Gastrocnemius medialis (tissue), 4 donors: ENCODE measurements at regions of chr2 and their contacts with region 1.

Region 1: GRCh38 chr2:159615140-159615951 is 1.0 kb downstream of the BAZ2B start:
- DNase-seq: peak; percentile 94 to 95
- ATAC-seq: peak; percentile 84 to 87
- H3K4me3 ChIP-seq: peak overlapping the region; percentile 67 to 92 (median 70)
- H3K27ac ChIP-seq: peak overlapping the region; percentile 87 to 99 (median 96)
- H3K4me1 ChIP-seq: peaks cover 32 to 47% of the 10 kb centered on the region in 2 donors
- H3K27me3 ChIP-seq: no peaks in the 10 kb centered on the region
- CTCF ChIP-seq: no peak
- POLR2A ChIP-seq: peak; percentile 73 to 83

Region 2: DNA sequence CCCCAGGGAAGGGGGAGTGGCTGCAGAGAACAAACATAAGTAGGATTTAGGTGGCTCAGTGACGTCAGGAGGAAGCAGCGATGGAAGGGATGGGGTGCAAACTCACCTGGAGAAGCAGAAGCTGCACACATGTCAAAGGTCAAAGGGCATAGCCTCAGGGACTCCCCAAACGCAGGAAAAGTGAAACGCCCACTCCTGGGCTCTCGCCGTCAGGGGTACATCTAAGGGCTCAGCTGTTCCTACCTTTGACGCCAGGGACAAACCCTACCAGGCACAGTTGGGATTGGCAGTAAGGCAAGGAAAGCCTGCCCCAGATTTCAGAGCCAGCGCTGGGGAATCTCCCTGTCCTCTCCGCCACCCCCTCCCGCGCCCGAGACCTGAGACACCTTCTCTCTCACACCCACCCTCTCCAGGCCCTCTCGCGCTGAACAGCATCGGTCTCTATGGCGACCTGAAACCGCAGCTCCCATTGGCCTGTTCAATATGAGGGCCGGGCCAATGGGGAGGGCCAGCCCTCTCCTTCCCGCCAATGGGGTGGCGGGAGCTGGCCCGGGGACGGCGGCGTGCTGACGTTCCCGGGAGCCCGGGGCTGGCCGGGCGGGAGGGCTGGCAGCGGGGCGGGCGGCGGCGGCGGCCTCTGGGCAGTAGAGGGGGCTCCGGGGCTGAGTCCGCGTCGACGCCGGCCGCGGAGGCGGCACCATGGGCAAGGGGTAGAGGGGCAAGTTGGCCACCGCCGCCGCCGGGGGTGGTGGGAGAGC is 1158.9 kb before region 1 on chr2 and contains the starts of genes CCDC148 and PKP4:
- in situ Hi-C with region 1: no loop called
- intact Hi-C with region 1: loop called (anchors 5 kb)
- DNase-seq: peak; percentile 81 to 85
- ATAC-seq: peak; percentile 85 to 89
- H3K4me3 ChIP-seq: peak within 1 kb of the TSS; percentile 79 to 91 (median 80)
- H3K27ac ChIP-seq: peak within 1 kb of the TSS; percentile 83 to 96 (median 90)
- H3K4me1 ChIP-seq: peaks cover 18 to 24% of the 10 kb centered on the region in 2 donors
- H3K27me3 ChIP-seq: no peaks in the 10 kb centered on the region
- CTCF ChIP-seq: peak in 3 of 5 experiments; percentile 10 to 42 (median 16)
- POLR2A ChIP-seq: peak; percentile 55 to 64
- total RNA-seq, gene CCDC148: 0.66 TPM in 1 of 4 donors, not detected in the others
- total RNA-seq, gene PKP4: 15.3 to 36.0 (median 25.6) TPM

Region 3: DNA sequence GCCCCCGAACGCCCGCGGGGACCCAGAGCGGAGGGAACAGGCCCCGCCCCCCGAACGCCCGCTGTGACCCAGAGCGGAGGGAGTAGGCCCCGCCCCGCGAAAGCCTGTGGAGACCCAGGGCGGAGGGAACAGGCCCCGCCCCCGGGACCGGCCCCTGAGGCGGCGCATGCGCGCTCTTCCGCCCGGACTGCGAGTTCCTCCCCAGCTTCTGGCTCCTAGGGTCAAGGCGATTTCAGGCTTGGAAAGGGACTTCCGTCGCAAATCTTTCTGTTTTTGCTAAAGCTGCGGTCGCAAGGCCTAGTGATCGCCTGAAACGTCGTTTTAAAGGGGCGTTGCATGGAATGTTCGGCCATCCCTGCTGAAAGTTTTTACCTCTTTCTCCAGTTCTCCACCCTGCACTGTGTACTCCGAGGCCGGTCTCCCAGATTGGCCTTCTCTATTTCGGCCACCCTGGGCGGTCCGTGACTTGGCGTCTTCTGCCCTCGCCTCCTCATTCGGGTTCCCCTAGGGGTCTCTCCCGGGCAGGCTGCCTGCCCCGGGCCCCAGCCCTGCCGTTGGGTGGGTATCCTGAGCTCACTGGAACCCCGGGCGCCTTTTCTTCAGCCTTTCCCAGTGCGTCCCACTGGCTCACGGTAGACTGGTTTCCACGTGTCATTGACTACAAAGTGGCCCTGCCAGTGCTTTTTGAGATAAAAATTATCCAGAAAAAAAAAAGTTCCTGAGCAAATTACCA is 328.5 kb before region 1 on chr2:
- in situ Hi-C with region 1: no loop called
- intact Hi-C with region 1: loop called (anchors 10 kb)
- DNase-seq: peak; percentile 95 to 98
- ATAC-seq: peak; percentile 93 to 94
- H3K4me3 ChIP-seq: peak overlapping the region; percentile 83 to 91 (median 88)
- H3K27ac ChIP-seq: peak overlapping the region; percentile 86 to 95 (median 89)
- H3K4me1 ChIP-seq: peaks cover 8 to 10% of the 10 kb centered on the region in 2 donors
- H3K27me3 ChIP-seq: no peaks in the 10 kb centered on the region
- CTCF ChIP-seq: no peak
- POLR2A ChIP-seq: peak; percentile 49 to 65

Region 4: DNA sequence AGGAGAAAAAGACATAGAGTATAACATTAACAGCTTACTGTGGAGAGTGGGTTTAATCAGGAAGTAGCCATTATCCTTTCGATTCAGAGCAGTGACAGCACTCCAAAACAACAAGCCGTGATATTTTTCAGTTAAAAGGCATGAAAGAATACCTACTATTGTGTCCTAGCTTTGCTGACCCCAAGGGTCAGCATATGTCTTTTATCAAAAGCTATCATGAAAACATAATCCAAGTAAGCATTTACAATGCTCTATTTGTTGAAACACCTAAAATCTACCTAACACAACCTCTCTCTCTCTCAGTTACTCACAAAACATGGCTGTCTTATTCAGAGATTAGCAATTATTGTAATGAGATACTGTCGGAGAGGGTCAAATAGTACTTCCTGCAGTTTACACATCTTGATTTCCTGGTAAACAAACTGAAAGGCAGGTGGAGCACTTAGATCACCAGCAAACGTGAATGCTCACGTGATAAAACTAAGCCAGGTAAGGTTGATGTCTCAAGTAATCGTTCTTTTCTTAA is 99.0 kb before region 1 on chr2:
- in situ Hi-C with region 1: loop called in 1 of 4 experiments (anchors 10 kb)
- intact Hi-C with region 1: loop called (anchors 5 kb)
- DNase-seq: peak; percentile 10 to 22
- ATAC-seq: peak; percentile 98 to 99
- H3K4me3 ChIP-seq: peak overlapping the region; percentile 53 to 63 (median 59)
- H3K27ac ChIP-seq: peak overlapping the region; percentile 66 to 81 (median 80)
- H3K4me1 ChIP-seq: peaks cover 29 to 52% of the 10 kb centered on the region in 2 donors
- H3K27me3 ChIP-seq: no peaks in the 10 kb centered on the region
- CTCF ChIP-seq: peak in 3 of 5 experiments; percentile 13 to 40 (median 14)
- POLR2A ChIP-seq: peak in 1 of 2 donors; percentile 35

Region 5: GRCh38 chr2:159712143-159712928 is 97.0 kb after region 1 on chr2 and contains the start of gene MARCHF7:
- in situ Hi-C with region 1: no loop called
- intact Hi-C with region 1: loop called (anchors 1 kb)
- DNase-seq: peak; percentile 95 to 97
- ATAC-seq: peak; percentile 92 to 94
- H3K4me3 ChIP-seq: peak within 1 kb of the TSS; percentile 92 to 93 (median 92)
- H3K27ac ChIP-seq: peak within 1 kb of the TSS; percentile 97 to 99 (median 98)
- H3K4me1 ChIP-seq: peaks cover 14 to 44% of the 10 kb centered on the region in 2 donors
- H3K27me3 ChIP-seq: no peaks in the 10 kb centered on the region
- CTCF ChIP-seq: peak; percentile 51 to 66 (median 63)
- POLR2A ChIP-seq: peak; percentile 95 to 97
- total RNA-seq, gene MARCHF7: 88.6 to 125 (median 93.4) TPM

Region 6: GRCh38 chr2:159797543-159798375 is 182.4 kb after region 1 on chr2 and contains the start of gene CD302:
- in situ Hi-C with region 1: no loop called
- intact Hi-C with region 1: loop called (anchors 5 kb)
- DNase-seq: peak; percentile 36 to 50
- ATAC-seq: peak; percentile 36 to 70
- H3K4me3 ChIP-seq: peak within 1 kb of the TSS; percentile 67 to 96 (median 78)
- H3K27ac ChIP-seq: peak within 1 kb of the TSS; percentile 56 to 78 (median 72)
- H3K4me1 ChIP-seq: peaks cover 0 to 9% of the 10 kb centered on the region in 2 donors
- H3K27me3 ChIP-seq: peaks cover 0 to 5% (median 0%) of the 10 kb centered on the region in 3 donors
- CTCF ChIP-seq: no peak
- POLR2A ChIP-seq: peak in 1 of 2 donors; percentile 22
- total RNA-seq, gene CD302: 6.7 to 10.3 (median 7.7) TPM